ENCODE measurements at regions of chr5 and their contacts with region 1.

Region 1: GRCh38 chr5:96904054-96904931 is 28.0 kb downstream of the ERAP2 start:
- DNase-seq: no peak
- ATAC-seq: peak; percentile 61
- H3K4me3 Mint-ChIP-seq: no peak overlapping the region
- H3K27ac Mint-ChIP-seq: no peak overlapping the region
- H3K4me1 Mint-ChIP-seq: peaks cover 9% of the 10 kb centered on the region
- H3K27me3 Mint-ChIP-seq: no peaks in the 10 kb centered on the region

Region 2: DNA sequence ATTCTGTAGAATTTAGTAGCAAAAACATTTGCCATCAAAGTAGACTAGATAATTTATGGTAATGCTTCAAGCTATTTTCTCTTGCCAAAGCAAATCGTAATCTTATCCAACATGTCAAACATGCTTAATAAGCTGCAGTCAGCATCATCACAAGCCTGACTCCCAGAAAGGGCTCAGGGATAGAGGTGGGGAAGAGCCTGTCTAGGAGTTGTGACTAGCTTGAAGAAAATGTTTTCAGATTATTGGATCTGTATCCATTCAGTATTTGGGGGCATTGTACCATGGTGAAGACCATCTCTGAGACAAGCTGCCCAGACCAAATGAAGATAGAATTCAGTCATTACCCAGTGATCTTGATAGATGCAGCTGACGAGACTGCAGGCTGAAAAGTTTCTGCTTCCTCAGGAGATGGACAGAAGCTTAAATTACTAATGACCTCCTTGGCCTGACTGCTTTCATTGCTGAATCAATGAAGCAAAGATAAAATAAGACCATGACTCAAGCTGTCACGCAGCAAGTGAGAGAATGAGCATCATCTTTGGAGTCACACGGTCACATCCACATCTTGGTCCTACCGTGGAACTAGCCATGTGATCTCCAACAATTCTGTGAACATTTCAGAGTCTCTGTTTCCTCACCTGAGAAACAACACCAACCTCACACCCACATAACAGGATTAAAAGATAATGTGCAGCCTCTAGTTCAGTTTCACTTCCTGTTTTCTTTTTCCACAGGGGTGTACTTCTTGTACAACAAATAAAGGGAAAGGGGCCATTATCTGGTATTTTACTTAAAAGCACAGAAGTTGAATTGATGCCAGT is 18.6 kb before region 1 on chr5:
- CTCF ChIA-PET with region 1: interaction called, 3 read pairs
- POLR2A ChIA-PET with region 1: interaction called, 10 read pairs
- intact Hi-C with region 1: no loop called
- DNase-seq: peak; percentile 49
- ATAC-seq: peak; percentile 85
- H3K4me3 Mint-ChIP-seq: peak overlapping the region; percentile 32
- H3K27ac Mint-ChIP-seq: peak overlapping the region; percentile 89
- H3K4me1 Mint-ChIP-seq: peaks cover 52% of the 10 kb centered on the region
- H3K27me3 Mint-ChIP-seq: no peaks in the 10 kb centered on the region

Region 3: DNA sequence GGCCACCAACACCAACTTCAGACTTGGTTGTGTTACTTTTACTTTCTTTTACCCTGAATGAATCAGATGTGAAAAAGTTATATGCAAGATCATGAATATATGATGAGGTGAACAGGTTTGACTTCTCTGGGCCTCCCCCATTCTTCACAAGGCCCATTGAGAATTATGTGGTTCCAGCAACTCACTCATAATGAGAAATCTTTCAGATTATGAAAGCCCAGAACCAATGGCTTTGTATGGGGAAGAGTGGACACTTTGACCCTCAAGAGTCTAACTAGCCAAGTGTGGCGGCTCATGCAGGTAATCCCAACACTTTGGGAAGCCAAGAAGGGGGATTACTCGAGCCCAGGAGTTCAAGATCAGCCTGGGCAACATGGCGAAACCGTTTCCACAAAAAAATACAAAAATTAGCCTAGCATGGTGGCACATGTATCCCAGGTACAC is 15.5 kb after region 1 on chr5:
- CTCF ChIA-PET with region 1: interaction called, 4 read pairs
- POLR2A ChIA-PET with region 1: no interaction called
- intact Hi-C with region 1: loop called in 1 of 2 experiments (anchors 1 kb)
- DNase-seq: peak; percentile 46
- ATAC-seq: peak; percentile 89
- H3K4me3 Mint-ChIP-seq: no peak overlapping the region
- H3K27ac Mint-ChIP-seq: peak overlapping the region; percentile 51
- H3K4me1 Mint-ChIP-seq: peaks cover 49% of the 10 kb centered on the region
- H3K27me3 Mint-ChIP-seq: no peaks in the 10 kb centered on the region

Region 4: DNA sequence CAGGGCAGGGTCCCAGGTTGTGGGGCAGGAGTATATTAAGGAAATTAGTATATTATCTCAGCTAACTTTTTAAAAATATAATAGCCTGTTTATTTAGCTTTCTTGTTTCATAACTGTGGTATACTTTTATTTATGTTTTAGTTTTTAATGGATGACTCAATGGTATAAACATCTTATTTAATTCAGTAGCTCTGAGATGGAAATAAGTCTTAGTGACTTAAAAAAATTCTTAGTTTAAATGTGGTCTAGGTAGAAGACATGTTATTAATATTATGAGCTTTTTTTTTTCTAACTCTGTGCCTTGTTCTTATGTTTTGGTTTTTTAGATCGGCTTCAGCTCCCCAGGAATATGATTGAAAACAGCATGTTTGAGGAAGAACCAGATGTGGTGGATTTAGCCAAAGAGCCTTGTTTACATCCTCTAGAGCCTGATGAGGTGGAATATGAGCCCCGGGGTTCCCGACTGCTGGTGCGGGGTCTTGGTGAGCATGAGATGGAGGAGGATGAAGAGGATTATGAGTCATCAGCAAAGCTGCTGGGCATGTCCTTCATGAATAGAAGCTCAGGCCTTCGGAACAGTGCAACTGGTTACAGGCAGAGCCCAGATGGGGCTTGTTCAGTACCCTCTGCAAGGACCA is 74.6 kb after region 1 on chr5:
- CTCF ChIA-PET with region 1: no interaction called
- POLR2A ChIA-PET with region 1: no interaction called
- intact Hi-C with region 1: no loop called
- DNase-seq: no peak
- ATAC-seq: no peak
- H3K4me3 Mint-ChIP-seq: no peak overlapping the region
- H3K27ac Mint-ChIP-seq: no peak overlapping the region
- H3K4me1 Mint-ChIP-seq: peaks cover 40% of the 10 kb centered on the region
- H3K27me3 Mint-ChIP-seq: no peaks in the 10 kb centered on the region

Region 5: DNA sequence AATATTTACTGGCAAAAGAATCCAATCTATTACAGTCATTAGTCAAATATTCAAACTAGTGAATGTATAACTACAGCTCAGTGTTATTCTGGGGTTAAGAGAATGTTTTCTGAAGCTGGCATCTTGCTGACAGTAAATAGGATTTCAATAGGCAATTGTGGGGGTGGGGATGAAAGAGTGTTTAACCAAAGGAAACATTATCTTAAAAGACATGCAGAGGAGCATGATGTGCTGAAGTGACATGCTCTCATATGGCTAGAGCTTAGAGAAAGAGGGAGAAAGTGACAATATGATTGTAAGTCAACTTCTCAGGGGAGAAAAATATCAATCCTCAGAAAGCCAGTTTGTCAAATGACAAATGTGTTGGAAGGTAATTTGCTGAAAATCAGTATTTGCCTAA is 897.2 kb after region 1 on chr5:
- CTCF ChIA-PET with region 1: no interaction called
- POLR2A ChIA-PET with region 1: no interaction called
- intact Hi-C with region 1: no loop called
- DNase-seq: no peak
- ATAC-seq: no peak
- H3K4me3 Mint-ChIP-seq: no peak overlapping the region
- H3K27ac Mint-ChIP-seq: no peak overlapping the region
- H3K4me1 Mint-ChIP-seq: no peaks in the 10 kb centered on the region
- H3K27me3 Mint-ChIP-seq: no peaks in the 10 kb centered on the region